Activated CD4-positive, alpha-beta T cell treated with anti-CD3 and anti-CD28 coated beads, Interleukin-2, amount 10 ng/mL, durations not matched to agents 7 days and 5 days (primary cell): ENCODE measurements at regions of chr6 and their contacts with region 1.

Region 1: DNA sequence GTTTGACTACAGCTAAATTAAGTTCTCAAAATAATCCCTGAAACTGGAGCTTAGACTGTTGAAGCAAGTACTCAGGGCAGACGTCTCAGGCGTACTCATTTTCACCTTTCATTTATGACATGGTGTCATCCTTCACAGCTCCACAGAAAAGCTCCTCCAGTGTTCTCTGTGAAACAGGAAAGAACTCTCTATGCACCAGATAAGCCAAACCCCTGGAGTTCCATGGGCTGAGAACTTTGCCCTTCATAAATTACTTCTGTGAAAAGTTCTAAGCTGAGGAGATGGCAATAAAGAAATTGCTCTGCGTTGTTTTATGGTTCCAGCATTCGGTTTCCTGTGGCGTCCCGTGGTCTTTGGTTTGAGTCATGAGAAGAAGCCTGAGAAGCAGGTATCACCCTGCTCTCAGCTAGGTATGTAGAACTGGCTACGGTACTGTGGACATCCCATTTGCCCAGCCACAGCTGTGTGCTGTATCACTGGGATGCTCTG is 20.2 kb upstream of the RREB1 start:
- DNase-seq: peak; percentile 52
- H3K4me3 Mint-ChIP-seq: peak overlapping the region; percentile 60
- H3K27ac Mint-ChIP-seq: no peak overlapping the region
- H3K4me1 Mint-ChIP-seq: peaks cover 32% of the 10 kb centered on the region
- H3K27me3 Mint-ChIP-seq: peaks cover 36% of the 10 kb centered on the region

Region 2: GRCh38 chr6:7159790-7160525 is 72.4 kb after region 1 on chr6:
- CTCF ChIA-PET with region 1: no interaction called
- POLR2A ChIA-PET with region 1: interaction called, 10 read pairs
- DNase-seq: no peak
- H3K4me3 Mint-ChIP-seq: no peak overlapping the region
- H3K27ac Mint-ChIP-seq: no peak overlapping the region
- H3K4me1 Mint-ChIP-seq: peaks cover 40% of the 10 kb centered on the region
- H3K27me3 Mint-ChIP-seq: no peaks in the 10 kb centered on the region